Endothelial cell of umbilical vein (primary cell): ENCODE measurements at regions of chr13 and their contacts with region 1.

Region 1: GRCh38 chr13:78241278-78241919 is 322.8 kb upstream of the EDNRB start:
- DNase-seq: peak; percentile 53
- H3K4me3 ChIP-seq: no peak overlapping the region
- H3K27ac ChIP-seq: no peak overlapping the region
- H3K4me1 ChIP-seq: no peaks in the 10 kb centered on the region
- H3K27me3 ChIP-seq: peaks cover 4% of the 10 kb centered on the region in 2 experiments
- CTCF ChIP-seq: peak; percentile 66 to 70
- POLR2A ChIP-seq: no peak

Region 2: DNA sequence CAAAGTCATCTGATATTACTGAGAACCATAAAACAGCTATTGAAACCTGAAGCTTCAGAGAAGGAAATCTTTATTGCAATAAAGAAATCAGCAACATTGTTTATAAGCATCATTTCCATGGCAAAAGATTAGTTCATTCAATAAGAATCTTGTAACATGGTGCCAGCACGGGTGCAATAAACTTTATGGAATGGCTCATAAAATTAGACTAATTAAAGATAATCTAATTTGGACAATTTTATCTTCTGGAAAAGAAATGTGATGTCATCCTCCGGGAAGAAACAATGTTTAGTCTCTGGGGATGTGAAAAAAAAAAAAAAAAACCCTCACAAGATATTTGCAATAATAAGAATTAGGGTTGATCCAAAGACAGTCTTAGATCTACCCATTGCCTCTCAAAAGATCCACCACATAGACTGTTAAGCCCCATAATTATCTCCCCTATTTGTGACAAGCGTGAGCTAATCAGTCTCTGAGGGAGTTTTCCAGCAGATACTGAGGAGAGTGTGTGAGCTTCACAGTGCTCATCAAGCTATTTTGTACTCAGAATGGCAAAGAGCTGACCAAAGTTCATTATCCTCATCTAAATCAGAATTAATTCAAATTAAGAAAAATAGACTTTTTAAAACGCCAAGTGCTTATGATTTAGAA is 25.8 kb before region 1 on chr13:
- CTCF ChIA-PET with region 1: interaction called, 13 read pairs
- POLR2A ChIA-PET with region 1: no interaction called
- dilution Hi-C with region 1: no loop called
- intact Hi-C with region 1: no loop called
- DNase-seq: no peak
- H3K4me3 ChIP-seq: no peak overlapping the region
- H3K27ac ChIP-seq: no peak overlapping the region
- H3K4me1 ChIP-seq: no peaks in the 10 kb centered on the region
- H3K27me3 ChIP-seq: peaks cover 0 to 18% of the 10 kb centered on the region in 2 experiments
- CTCF ChIP-seq: no peak
- POLR2A ChIP-seq: no peak

Region 3: DNA sequence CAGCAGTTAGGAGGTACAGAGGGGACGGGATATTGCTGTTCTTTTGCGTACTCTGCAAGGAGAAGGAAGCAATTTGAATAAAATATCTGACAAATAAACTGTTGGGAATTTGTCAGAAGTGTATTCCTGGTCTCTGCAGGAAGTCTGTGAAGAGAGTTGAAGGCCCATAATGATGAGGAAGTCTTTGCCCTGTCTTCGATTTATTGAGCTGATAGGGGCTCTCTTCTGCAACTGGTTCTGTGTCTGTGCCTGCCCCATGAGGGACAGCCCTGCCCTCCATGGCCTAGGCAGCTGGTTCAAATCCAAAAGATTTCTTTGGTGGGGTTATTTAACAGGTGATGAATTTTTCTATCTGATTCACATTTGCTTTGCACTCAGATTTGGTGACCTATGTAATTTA is 16.9 kb after region 1 on chr13:
- CTCF ChIA-PET with region 1: interaction called, 73 read pairs
- POLR2A ChIA-PET with region 1: no interaction called
- dilution Hi-C with region 1: no loop called
- intact Hi-C with region 1: no loop called
- DNase-seq: no peak
- H3K4me3 ChIP-seq: no peak overlapping the region
- H3K27ac ChIP-seq: no peak overlapping the region
- H3K4me1 ChIP-seq: no peaks in the 10 kb centered on the region
- H3K27me3 ChIP-seq: peaks cover 0 to 1% of the 10 kb centered on the region in 2 experiments
- CTCF ChIP-seq: no peak
- POLR2A ChIP-seq: no peak

Region 4: GRCh38 chr13:78334059-78334458 is 92.7 kb after region 1 on chr13:
- CTCF ChIA-PET with region 1: no interaction called
- POLR2A ChIA-PET with region 1: no interaction called
- dilution Hi-C with region 1: no loop called
- intact Hi-C with region 1: no loop called
- DNase-seq: no peak
- H3K4me3 ChIP-seq: no peak overlapping the region
- H3K27ac ChIP-seq: no peak overlapping the region
- H3K4me1 ChIP-seq: no peaks in the 10 kb centered on the region
- H3K27me3 ChIP-seq: no peaks in the 10 kb centered on the region
- CTCF ChIP-seq: no peak
- POLR2A ChIP-seq: no peak

Region 5: GRCh38 chr13:78759704-78760103 is 518.3 kb after region 1 on chr13:
- CTCF ChIA-PET with region 1: interaction called, 26 read pairs
- POLR2A ChIA-PET with region 1: no interaction called
- dilution Hi-C with region 1: no loop called
- intact Hi-C with region 1: loop called (anchors 5 kb)
- DNase-seq: no peak
- H3K4me3 ChIP-seq: no peak overlapping the region
- H3K27ac ChIP-seq: no peak overlapping the region
- H3K4me1 ChIP-seq: peaks cover 8% of the 10 kb centered on the region
- H3K27me3 ChIP-seq: no peaks in the 10 kb centered on the region
- CTCF ChIP-seq: no peak
- POLR2A ChIP-seq: no peak

Region 6: DNA sequence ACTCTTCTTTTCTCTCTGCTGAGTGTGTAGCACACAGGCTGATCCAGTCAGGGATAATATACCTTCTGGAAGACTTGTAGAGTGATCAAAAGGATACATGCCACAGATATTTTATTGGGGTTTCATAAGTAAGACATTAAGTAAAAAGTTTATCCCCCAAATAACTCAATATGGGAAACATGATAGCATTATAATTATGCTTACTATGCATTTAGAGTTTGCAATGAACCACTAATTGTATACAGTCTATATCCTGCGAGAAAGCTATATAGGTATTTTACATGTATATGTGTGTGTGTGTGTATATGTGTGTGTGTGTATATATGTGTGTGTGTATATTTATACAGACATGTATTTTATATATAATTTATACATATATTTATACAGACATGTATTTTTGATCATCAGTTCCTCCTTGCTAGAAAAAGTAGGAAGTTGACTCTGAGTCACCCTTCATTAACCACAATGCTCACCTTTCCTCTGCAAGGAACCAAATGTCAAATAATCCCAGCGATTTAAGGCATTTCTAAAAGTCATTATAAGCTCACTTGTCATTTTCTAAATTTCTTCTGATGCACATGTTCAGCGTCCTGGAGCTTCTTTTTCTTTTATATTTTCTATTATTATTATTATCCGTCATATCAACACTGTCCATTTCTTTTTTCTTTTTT is 730.1 kb after region 1 on chr13:
- CTCF ChIA-PET with region 1: interaction called, 10 read pairs
- POLR2A ChIA-PET with region 1: no interaction called
- dilution Hi-C with region 1: no loop called
- intact Hi-C with region 1: no loop called
- DNase-seq: no peak
- H3K4me3 ChIP-seq: no peak overlapping the region
- H3K27ac ChIP-seq: no peak overlapping the region
- H3K4me1 ChIP-seq: no peaks in the 10 kb centered on the region
- H3K27me3 ChIP-seq: no peaks in the 10 kb centered on the region
- CTCF ChIP-seq: no peak
- POLR2A ChIP-seq: no peak